K562 (cell line): ENCODE measurements at regions of chr13 and their contacts with region 1.

Region 1: GRCh38 chr13:78978381-78978998 is 319.5 kb upstream of the OBI1 start:
- DNase-seq: peak; percentile 20 to 52 (median 26)
- ATAC-seq: peak; percentile 80
- H3K4me3 ChIP-seq: no peak overlapping the region
- H3K27ac ChIP-seq: no peak overlapping the region
- H3K4me1 ChIP-seq: no peaks in the 10 kb centered on the region
- H3K27me3 ChIP-seq: no peaks in the 10 kb centered on the region
- CTCF ChIP-seq: peak; percentile 36 to 57 (median 52); a peak in 5 of 6 replicates
- EP300 ChIP-seq: no peak
- POLR2A ChIP-seq: no peak
- RAD21 ChIP-seq: peak; percentile 56 to 78

Region 2: DNA sequence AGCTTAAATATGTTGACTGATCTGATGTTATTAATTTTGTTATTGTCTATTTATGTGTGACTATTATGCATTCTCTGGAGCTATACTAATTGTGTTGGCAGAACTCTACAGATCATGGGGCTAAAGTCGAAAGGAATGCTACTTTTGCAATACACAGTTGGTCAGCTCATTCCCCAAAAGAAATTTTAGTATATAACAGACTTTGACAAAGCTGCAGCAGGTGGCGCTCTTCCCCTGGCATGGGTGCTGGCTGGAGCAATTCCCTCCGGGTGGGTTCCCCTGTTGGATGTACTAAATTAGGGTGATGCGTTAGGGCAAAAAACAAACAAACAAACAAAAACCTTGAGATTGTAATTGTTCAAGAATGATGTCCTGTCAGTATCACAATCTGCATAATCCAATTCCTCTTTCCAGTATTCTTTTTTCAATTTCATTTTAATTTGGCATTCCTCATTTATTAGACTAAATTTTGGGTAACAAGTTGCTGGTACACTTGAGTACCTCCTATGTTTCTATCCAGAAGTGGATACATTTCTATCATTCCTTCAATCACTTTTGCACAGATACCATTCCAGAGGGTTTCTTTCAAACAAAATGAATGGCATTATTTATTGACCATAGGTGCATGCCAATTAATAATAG is 737.1 kb before region 1 on chr13:
- CTCF ChIA-PET with region 1: no interaction called
- POLR2A ChIA-PET with region 1: no interaction called
- in situ Hi-C with region 1: no loop called
- intact Hi-C with region 1: loop called (anchors 1 kb)
- DNase-seq: peak; percentile 3 to 13 (median 8)
- ATAC-seq: no peak
- H3K4me3 ChIP-seq: no peak overlapping the region
- H3K27ac ChIP-seq: no peak overlapping the region
- H3K4me1 ChIP-seq: no peaks in the 10 kb centered on the region
- H3K27me3 ChIP-seq: no peaks in the 10 kb centered on the region
- CTCF ChIP-seq: peak; percentile 23 to 29 (median 25); a peak in 1 of 6 replicates
- EP300 ChIP-seq: no peak
- POLR2A ChIP-seq: no peak
- RAD21 ChIP-seq: peak in 1 of 2 experiments; percentile 50; a peak in 2 of 4 replicates

Region 3: GRCh38 chr13:78317030-78317429 is 661.5 kb before region 1 on chr13:
- CTCF ChIA-PET with region 1: no interaction called
- POLR2A ChIA-PET with region 1: no interaction called
- in situ Hi-C with region 1: loop called (anchors 10 kb)
- intact Hi-C with region 1: no loop called
- DNase-seq: no peak
- ATAC-seq: no peak
- H3K4me3 ChIP-seq: no peak overlapping the region
- H3K27ac ChIP-seq: no peak overlapping the region
- H3K4me1 ChIP-seq: no peaks in the 10 kb centered on the region
- H3K27me3 ChIP-seq: no peaks in the 10 kb centered on the region
- CTCF ChIP-seq: no peak
- EP300 ChIP-seq: no peak
- POLR2A ChIP-seq: no peak
- RAD21 ChIP-seq: peak in 1 of 2 experiments; percentile 14; a peak in 1 of 4 replicates

Region 4: DNA sequence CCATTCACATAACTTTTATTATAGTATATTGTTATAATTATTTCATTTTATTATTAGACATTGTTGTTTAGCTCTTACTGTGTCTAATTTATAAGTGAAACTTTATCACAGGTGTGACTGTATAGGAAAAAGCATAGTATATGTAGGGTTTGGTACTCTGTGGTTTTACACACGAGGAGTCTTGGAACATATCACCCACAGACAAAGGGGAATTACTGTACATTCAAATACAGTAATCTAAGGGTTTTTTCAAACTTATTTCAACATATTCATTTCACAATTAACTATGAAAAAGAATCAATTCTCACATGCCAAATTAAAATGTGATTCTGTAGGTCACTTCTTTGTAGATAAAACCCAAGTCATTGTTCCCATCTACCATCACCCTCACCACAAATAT is 381.6 kb after region 1 on chr13:
- CTCF ChIA-PET with region 1: no interaction called
- POLR2A ChIA-PET with region 1: no interaction called
- in situ Hi-C with region 1: no loop called
- intact Hi-C with region 1: no loop called
- DNase-seq: no peak
- ATAC-seq: no peak
- H3K4me3 ChIP-seq: no peak overlapping the region
- H3K27ac ChIP-seq: no peak overlapping the region
- H3K4me1 ChIP-seq: no peaks in the 10 kb centered on the region
- H3K27me3 ChIP-seq: no peaks in the 10 kb centered on the region
- CTCF ChIP-seq: no peak
- EP300 ChIP-seq: no peak
- POLR2A ChIP-seq: no peak
- RAD21 ChIP-seq: no peak